Endothelial cell of umbilical vein (primary cell): ENCODE measurements at regions of chr6 and their contacts with region 1.

Region 1: GRCh38 chr6:24666641-24667377 is at the starts of genes ACOT13 and TDP2:
- DNase-seq: peak; percentile 98
- H3K4me3 ChIP-seq: peak within 1 kb of the TSS; percentile 71 to 92 (median 90)
- H3K27ac ChIP-seq: peak within 1 kb of the TSS; percentile 75
- H3K4me1 ChIP-seq: peaks cover 13% of the 10 kb centered on the region
- H3K27me3 ChIP-seq: no peaks in the 10 kb centered on the region
- CTCF ChIP-seq: peak; percentile 34 to 68
- POLR2A ChIP-seq: peak; percentile 83
- total RNA-seq, gene ACOT13: 15.3 and 24.1 TPM in 2 replicates
- total RNA-seq, gene TDP2: 35.3 and 39.2 TPM in 2 replicates

Region 2: DNA sequence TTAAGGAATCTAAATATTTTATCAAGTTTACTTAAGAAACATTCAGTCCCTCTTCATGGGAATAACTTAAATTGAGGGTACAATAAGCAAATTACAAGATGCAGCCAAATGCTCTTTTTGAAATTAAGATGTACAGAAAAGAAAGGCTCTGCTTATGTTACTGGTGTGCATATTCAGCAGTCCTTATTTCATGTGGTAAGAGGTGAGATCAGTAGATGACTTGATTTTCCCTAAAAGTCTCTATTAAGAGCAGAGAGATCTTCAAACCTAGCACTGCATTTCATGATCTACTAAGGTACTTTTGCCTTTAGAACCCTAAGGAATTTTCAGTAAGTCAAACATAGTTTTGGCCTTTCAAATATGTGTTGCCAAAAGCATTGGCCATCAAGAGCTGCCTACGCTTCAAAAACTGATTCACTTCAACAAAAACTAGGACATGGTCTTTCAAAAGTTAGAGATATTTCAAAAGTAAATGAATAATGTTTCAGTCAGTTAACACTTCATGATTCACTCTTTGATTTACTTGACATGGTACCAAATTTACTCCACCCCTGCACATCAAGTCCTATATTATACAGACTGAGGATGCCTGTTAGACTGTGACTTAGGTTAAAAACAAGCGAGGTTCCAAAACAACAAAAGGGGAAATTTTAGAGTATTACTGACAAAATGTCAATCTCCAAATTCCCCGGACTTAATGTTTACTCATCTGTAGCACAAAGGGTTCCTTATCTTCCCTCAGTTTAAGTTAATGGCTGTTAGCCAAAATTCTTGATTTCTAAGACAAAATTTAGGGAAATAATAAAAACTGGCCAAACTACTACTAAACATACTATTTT is 32.9 kb after region 1 on chr6:
- CTCF ChIA-PET with region 1: interaction called, 3 read pairs
- POLR2A ChIA-PET with region 1: no interaction called
- dilution Hi-C with region 1: no loop called
- intact Hi-C with region 1: loop called (anchors 5 kb)
- DNase-seq: peak; percentile 51
- H3K4me3 ChIP-seq: no peak overlapping the region
- H3K27ac ChIP-seq: no peak overlapping the region
- H3K4me1 ChIP-seq: no peaks in the 10 kb centered on the region
- H3K27me3 ChIP-seq: no peaks in the 10 kb centered on the region
- CTCF ChIP-seq: no peak
- POLR2A ChIP-seq: no peak

Region 3: DNA sequence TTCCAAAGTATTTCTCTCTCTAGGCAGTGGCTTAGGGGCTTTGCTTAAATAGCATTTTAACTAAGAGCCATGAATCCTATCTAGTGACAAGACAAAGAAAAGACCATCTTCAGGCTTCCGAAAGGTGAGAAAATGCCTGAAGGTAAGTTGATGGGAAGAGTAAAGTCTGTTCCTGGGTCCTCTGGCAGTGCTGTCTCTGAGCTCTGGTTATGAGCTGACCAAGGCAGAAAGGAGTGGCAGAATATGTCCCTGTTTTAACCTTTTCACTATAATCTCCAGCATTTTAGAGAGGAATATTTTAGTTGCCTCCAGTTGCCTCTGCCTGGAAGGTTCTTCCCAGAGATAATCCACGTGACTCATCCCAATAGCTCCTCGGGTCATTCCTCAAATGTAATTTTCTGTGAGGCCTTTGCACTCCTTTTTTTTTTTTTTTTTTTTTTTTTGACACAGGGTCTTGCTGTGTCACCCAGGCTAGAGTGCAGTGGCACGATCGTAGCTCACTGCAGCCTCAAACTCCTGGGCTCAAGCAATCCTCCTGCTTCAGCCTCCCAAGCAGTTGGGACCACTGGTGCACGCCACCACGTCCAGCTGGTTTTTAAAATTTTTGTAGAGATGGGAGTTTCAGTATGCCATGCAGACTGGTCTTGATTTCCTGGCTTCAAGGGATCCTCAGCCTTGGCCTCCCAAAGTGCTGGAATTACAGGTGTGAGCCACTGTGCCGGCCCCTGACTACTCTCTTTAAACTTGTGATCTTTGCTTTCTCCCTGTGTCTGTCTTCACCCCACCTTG is 135.7 kb after region 1 on chr6:
- CTCF ChIA-PET with region 1: no interaction called
- POLR2A ChIA-PET with region 1: no interaction called
- dilution Hi-C with region 1: no loop called
- intact Hi-C with region 1: no loop called
- DNase-seq: no peak
- H3K4me3 ChIP-seq: no peak overlapping the region
- H3K27ac ChIP-seq: no peak overlapping the region
- H3K4me1 ChIP-seq: no peaks in the 10 kb centered on the region
- H3K27me3 ChIP-seq: peaks cover 0 to 2% of the 10 kb centered on the region in 2 experiments
- CTCF ChIP-seq: no peak
- POLR2A ChIP-seq: no peak

Region 4: DNA sequence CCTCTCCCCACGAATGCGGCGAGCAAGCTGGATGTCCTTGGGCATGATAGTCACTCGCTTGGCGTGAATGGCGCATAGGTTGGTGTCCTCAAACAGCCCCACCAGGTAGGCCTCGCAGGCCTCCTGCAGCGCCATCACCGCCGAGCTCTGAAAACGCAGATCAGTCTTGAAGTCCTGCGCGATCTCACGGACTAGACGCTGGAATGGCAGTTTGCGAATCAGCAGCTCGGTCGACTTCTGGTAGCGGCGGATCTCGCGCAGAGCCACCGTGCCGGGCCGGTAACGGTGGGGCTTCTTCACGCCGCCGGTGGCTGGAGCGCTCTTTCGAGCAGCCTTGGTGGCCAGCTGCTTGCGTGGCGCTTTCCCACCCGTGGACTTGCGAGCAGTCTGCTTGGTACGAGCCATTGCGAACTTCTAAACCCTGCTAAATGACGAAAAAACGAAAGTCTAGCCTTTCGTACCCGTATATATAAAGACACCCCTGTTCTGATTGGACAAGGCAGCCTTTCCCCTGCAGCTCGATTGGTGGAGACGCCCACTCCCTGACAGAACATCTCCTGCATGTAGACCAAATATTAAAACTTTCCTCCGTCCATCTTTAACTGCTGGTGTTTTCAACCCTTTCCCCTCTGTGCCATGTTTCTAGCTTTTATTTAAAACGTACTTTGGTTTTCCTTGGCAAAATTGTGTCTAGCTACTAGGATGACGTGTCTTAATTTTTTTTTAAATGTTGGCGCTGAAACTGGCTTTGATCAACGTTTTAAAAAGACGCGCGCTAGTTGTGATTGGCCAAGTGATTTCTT is 1530.2 kb after region 1 on chr6:
- CTCF ChIA-PET with region 1: no interaction called
- POLR2A ChIA-PET with region 1: no interaction called
- dilution Hi-C with region 1: no loop called
- intact Hi-C with region 1: no loop called
- DNase-seq: peak; percentile 96
- H3K4me3 ChIP-seq: peak overlapping the region; percentile 1 to 98 (median 52)
- H3K27ac ChIP-seq: peak overlapping the region; percentile 94
- H3K4me1 ChIP-seq: peaks cover 19% of the 10 kb centered on the region
- H3K27me3 ChIP-seq: no peaks in the 10 kb centered on the region
- CTCF ChIP-seq: no peak
- POLR2A ChIP-seq: peak; percentile 97